GM12878 (cell line): ENCODE measurements at regions of chr11 and their contacts with region 1.

Region 1: GRCh38 chr11:10490398-10491241 is 35.6 kb downstream of the AMPD3 start:
- DNase-seq: no peak
- ATAC-seq: no peak
- H3K4me3 ChIP-seq: no peak overlapping the region
- H3K27ac ChIP-seq: no peak overlapping the region
- H3K4me1 ChIP-seq: peaks cover 14% of the 10 kb centered on the region
- H3K27me3 ChIP-seq: no peaks in the 10 kb centered on the region
- CTCF ChIP-seq: no peak
- EP300 ChIP-seq: no peak
- POLR2A ChIP-seq: no peak
- RAD21 ChIP-seq: no peak

Region 2: GRCh38 chr11:10441652-10442503 is 48.7 kb before region 1 on chr11:
- CTCF ChIA-PET with region 1: interaction called, 4 read pairs
- POLR2A ChIA-PET with region 1: no interaction called
- RAD21 ChIA-PET with region 1: interaction called, 9 read pairs
- SMC1A ChIA-PET with region 1: interaction called, 14 read pairs
- in situ Hi-C with region 1: no loop called
- intact Hi-C with region 1: no loop called
- DNase-seq: peak; percentile 82
- ATAC-seq: peak; percentile 96
- H3K4me3 ChIP-seq: no peak overlapping the region
- H3K27ac ChIP-seq: no peak overlapping the region; the same call in 1 of the 2 replicates
- H3K4me1 ChIP-seq: peaks cover 18% of the 10 kb centered on the region
- H3K27me3 ChIP-seq: peaks cover 0 to 3% of the 10 kb centered on the region in 2 experiments; a peak in 1 of 4 replicates
- CTCF ChIP-seq: no peak
- EP300 ChIP-seq: peak; percentile 72 to 88; a peak in 3 of 4 replicates
- POLR2A ChIP-seq: no peak
- RAD21 ChIP-seq: no peak

Region 3: GRCh38 chr11:10450464-10451425 is 39.9 kb before region 1 on chr11:
- CTCF ChIA-PET with region 1: interaction called, 5 read pairs
- POLR2A ChIA-PET with region 1: interaction called, 12 read pairs
- RAD21 ChIA-PET with region 1: interaction called, 63 read pairs
- SMC1A ChIA-PET with region 1: interaction called, 38 read pairs
- in situ Hi-C with region 1: no loop called
- intact Hi-C with region 1: no loop called
- DNase-seq: no peak
- ATAC-seq: peak; percentile 49
- H3K4me3 ChIP-seq: peak overlapping the region; percentile 24; the same call in 1 of the 2 replicates
- H3K27ac ChIP-seq: no peak overlapping the region
- H3K4me1 ChIP-seq: peaks cover 23% of the 10 kb centered on the region
- H3K27me3 ChIP-seq: peaks cover 2 to 10% of the 10 kb centered on the region in 2 experiments; a peak in 3 of 4 replicates
- CTCF ChIP-seq: peak; percentile 23 to 48 (median 44); a peak in 5 of 6 replicates
- EP300 ChIP-seq: no peak
- POLR2A ChIP-seq: peak; percentile 42; the same call in 1 of the 2 replicates
- RAD21 ChIP-seq: no peak